Colonic mucosa (tissue), 4 donors: ENCODE measurements at regions of chr1 and their contacts with region 1.

Region 1: DNA sequence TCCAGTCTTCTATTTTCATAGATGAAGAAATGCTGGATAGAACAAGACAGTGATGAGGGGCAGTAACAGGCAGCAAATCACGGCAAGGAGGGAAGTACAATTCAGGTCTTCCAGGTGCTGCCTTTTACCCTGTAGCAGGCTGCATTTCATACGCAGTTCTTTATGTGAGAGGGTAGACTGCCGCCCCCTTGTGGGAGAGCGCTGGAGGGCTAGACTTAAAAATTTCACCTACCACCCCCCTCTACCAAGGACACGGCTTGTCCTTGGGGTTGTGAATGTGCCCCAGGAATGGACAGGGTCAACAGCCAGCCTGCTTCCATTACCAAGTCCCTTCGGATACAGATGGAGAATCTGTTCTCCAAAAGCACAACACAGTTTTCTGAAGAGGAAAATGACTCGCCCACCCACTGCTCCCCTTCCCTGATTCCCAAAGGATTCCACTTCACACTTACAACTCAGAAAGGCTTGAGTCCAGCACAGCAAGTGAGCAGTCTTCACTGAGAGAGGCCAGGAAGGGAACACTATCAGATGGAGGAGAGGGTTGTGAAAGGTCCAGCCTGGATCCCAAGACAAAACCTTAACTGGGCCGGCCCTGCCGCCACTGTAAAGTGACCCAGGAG is 7.4 kb downstream of the WDR77 start:
- DNase-seq: peak; percentile 29
- H3K4me3 ChIP-seq: no peak overlapping the region
- H3K27ac ChIP-seq: no peak overlapping the region
- H3K4me1 ChIP-seq: no peaks in the 10 kb centered on the region
- H3K27me3 ChIP-seq: no peaks in the 10 kb centered on the region
- CTCF ChIP-seq: peak; percentile 22

Region 2: DNA sequence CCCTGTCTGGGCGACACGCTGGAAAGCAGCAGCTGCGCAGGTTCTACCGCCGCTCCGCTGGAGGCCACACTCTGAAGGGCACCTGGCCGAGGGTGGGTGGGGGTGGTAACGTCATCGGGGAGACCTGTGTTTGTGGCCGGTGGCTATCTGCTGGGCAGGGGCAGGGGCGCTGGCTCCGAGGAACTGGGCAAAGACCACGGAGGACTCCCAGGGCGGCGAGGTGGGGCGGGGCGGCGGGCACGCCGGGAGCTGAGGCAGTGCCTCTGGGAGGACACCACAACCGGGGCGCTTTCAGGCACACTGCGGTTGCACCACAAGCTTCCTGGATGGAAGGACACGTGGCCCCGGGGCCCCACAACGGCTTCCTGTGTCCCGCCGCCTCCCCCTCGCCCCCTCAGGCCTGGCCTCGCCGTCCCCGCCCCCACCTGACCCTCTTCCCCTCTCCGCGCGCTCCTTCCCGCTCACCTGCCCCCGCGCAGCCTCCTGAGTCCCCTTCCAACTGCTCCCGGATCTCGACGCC is 237.9 kb before region 1 on chr1:
- intact Hi-C with region 1: no loop called
- DNase-seq: peak; percentile 88
- H3K4me3 ChIP-seq: peak overlapping the region; percentile 77
- H3K27ac ChIP-seq: peak overlapping the region; percentile 92
- H3K4me1 ChIP-seq: peaks cover 23% of the 10 kb centered on the region
- H3K27me3 ChIP-seq: no peaks in the 10 kb centered on the region
- CTCF ChIP-seq: no peak

Region 3: DNA sequence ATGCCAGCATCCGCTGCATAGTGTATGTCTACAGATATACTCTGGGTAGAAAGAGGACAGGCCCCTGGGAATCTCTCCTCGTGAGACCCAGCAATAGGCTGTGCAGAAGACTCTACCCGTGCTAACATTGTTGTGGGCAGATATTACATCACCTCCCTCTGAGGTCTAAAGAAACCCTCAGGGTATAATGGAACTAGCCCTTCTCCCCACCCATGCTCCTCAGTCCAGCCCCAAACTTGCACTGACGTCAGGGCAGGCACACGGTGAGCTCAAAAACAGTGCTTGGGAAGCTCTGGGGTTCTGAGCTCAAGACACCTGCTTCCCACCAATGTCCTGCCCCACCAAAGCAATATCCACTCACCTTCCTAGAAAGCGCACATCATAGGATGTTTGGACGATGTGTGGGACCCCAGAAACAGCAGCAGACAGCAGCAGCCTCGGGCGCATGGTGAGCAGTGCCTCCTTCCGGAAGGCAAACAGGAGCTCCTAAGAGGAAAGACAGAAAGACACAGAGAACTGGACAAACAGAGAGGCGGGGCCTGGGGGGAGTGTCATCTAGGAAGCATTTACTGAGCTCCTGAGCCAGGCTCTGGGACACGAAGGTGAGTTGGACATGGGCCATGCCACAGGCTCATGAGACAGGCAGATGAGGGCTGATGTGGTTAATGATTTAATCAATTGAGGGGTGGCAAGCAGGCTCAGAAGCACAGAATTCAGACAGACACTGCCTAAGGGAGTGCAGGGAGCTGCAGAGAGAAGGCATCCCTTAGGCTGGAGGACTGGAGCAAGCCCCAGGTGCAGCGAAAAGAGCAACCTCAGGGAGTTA is 18.9 kb before region 1 on chr1:
- intact Hi-C with region 1: loop called (anchors 2 kb)
- DNase-seq: peak; percentile 87
- H3K4me3 ChIP-seq: no peak overlapping the region
- H3K27ac ChIP-seq: no peak overlapping the region
- H3K4me1 ChIP-seq: no peaks in the 10 kb centered on the region
- H3K27me3 ChIP-seq: no peaks in the 10 kb centered on the region
- CTCF ChIP-seq: no peak